HCT116 (cell line): ENCODE measurements at regions of chr5 and their contacts with region 1.

Region 1: GRCh38 chr5:1641560-1642166 is 117.9 kb upstream of the LPCAT1 start:
- DNase-seq: peak; percentile 83
- ATAC-seq: peak; percentile 86
- H3K4me3 ChIP-seq: no peak overlapping the region
- H3K27ac ChIP-seq: no peak overlapping the region
- H3K4me1 ChIP-seq: peaks cover 0 to 7% of the 10 kb centered on the region in 2 experiments; a peak in 2 of 4 replicates
- H3K27me3 ChIP-seq: peaks cover 9% of the 10 kb centered on the region; the same call in 1 of the 2 replicates
- CTCF ChIP-seq: peak; percentile 98 to 99 (median 98)
- POLR2A ChIP-seq: no peak
- RAD21 ChIP-seq: peak; percentile 80

Region 2: DNA sequence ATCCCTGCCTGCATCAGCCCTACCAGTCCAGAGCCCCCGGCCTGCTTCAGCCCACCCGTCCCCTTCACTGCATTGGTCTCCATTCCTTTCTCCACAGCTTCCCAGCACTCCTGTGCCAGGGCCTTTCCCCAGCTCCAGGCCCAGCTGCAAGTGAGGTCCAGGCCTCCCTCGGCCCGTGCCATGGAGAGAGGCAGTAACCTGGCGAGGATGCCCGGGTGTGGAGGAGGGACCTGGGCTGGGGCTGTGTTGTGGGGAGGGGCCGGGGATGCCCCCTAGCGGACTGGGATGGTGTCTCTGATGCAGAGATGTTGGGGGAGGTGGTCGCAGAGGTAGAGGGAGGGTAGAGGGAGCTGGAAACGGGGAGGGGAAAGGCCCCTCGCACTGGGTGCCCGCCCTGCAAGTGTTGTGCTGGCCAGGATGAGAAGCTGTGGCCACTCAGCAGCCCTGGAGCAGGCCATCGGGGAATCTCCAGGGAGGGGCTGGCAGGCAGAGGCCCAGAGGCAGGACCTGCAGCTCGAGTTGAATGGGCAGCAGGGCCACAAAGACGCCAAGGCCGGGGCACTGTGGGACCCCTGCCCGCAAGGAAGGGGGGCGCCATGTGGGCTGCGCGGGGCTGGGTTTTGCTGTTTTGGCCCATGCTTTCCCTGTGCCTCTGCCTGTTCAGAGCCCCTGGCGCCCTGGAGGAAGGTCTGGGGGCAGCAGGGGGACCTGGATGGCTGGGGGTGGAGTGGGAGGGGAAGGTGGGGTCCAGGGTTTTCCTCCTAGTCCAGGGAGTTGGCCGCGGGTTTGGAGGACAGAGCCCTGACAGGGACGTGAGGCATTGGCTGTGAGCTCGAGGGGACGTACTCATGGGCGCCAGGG is 659.1 kb before region 1 on chr5:
- CTCF ChIA-PET with region 1: no interaction called
- POLR2A ChIA-PET with region 1: no interaction called
- RAD21 ChIA-PET with region 1: no interaction called
- intact Hi-C with region 1: no loop called
- DNase-seq: no peak
- ATAC-seq: peak; percentile 93
- H3K4me3 ChIP-seq: no peak overlapping the region
- H3K27ac ChIP-seq: no peak overlapping the region
- H3K4me1 ChIP-seq: no peaks in the 10 kb centered on the region
- H3K27me3 ChIP-seq: no peaks in the 10 kb centered on the region; the same call in 1 of the 2 replicates
- CTCF ChIP-seq: peak; percentile 6 to 55 (median 55); a peak in 4 of 6 replicates
- POLR2A ChIP-seq: no peak
- RAD21 ChIP-seq: no peak

Region 3: DNA sequence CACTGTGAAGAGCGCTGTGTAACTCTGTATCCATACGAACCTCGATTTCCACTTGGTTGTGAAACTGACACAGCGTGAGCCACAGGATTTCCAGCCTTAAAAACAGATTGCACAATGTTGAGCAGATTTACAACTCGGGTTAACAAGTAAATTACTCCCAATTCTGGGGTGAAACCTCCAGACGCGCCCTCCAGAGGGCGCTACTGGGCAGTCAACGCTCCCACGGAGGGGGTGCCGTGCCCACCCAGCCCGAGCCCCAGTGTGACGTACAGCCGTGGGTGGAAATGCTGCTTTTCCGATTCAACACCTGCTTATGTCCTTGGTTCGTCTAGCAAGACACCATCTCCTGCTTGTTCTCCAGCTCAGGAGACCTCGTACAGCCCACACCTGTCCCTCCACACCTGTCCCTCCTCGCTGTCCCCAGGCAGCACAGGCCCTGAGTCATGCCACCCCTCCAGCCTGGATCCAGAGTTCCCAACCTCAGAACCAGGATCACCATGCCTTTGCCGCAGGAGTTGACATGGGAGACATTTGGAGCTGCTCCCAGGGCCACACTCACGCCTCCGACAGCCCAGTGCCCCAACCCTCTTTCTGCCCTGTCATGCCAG is 162.0 kb before region 1 on chr5:
- CTCF ChIA-PET with region 1: interaction called, 3 read pairs
- POLR2A ChIA-PET with region 1: no interaction called
- RAD21 ChIA-PET with region 1: no interaction called
- intact Hi-C with region 1: loop called (anchors 1 kb)
- DNase-seq: no peak
- ATAC-seq: peak; percentile 57
- H3K4me3 ChIP-seq: no peak overlapping the region
- H3K27ac ChIP-seq: no peak overlapping the region
- H3K4me1 ChIP-seq: no peaks in the 10 kb centered on the region
- H3K27me3 ChIP-seq: no peaks in the 10 kb centered on the region
- CTCF ChIP-seq: peak; percentile 63 to 89 (median 75); a peak in 5 of 6 replicates
- POLR2A ChIP-seq: no peak
- RAD21 ChIP-seq: peak; percentile 65

Region 4: GRCh38 chr5:2370626-2371418 is 729.2 kb after region 1 on chr5:
- CTCF ChIA-PET with region 1: no interaction called
- POLR2A ChIA-PET with region 1: no interaction called
- RAD21 ChIA-PET with region 1: no interaction called
- intact Hi-C with region 1: no loop called
- DNase-seq: no peak
- ATAC-seq: no peak
- H3K4me3 ChIP-seq: no peak overlapping the region
- H3K27ac ChIP-seq: no peak overlapping the region
- H3K4me1 ChIP-seq: no peaks in the 10 kb centered on the region
- H3K27me3 ChIP-seq: no peaks in the 10 kb centered on the region
- CTCF ChIP-seq: no peak
- POLR2A ChIP-seq: no peak
- RAD21 ChIP-seq: no peak